K562 (cell line): ENCODE measurements at regions of chr17 and their contacts with region 1.

Region 1: DNA sequence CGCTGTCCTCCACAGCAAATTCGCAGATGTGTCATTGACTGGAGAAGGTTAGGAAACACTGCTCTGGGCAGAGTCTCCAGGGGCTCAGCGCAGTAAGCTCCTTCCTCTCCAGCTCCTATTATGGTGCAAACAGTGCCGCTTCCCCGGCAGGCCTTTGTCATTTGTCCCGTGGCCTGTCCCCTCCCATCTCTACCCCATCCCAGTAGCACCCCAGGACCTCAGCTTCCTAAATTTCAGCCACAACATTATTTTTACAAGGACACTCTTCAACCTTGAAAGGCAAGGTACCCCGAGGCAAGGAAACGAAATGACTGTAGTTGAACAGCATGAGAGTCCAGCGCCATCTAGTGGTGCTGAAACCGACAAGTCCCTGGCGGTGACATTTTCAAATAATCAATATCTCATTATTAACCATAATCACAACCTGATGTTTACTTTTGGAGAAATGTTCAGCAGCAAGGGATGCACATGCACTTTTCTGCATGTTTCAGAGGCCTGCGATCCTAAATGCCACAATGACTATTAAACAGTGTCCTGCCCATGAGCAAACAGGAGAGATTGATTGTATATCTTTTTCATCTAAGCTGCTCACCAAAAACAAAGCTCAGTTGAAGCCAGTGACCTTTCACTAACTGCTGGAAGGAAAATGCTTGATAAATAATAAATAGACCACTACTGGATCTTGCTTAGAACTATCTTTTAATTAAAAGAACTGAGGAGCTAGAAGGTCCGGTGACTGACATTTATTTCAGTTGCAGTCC is 16.5 kb downstream of the MRPS23 start:
- DNase-seq: peak; percentile 53 to 78 (median 62)
- ATAC-seq: peak; percentile 86
- H3K4me3 ChIP-seq: no peak overlapping the region
- H3K27ac ChIP-seq: no peak overlapping the region
- H3K4me1 ChIP-seq: 0 out of 5 replicates have a peak, but pooled peaks cover 0 to 3% of the 10 kb centered on the region in 2 experiments
- H3K27me3 ChIP-seq: no peaks in the 10 kb centered on the region; a peak in 1 of 5 replicates
- CTCF ChIP-seq: peak; percentile 87 to 91 (median 90)
- EP300 ChIP-seq: no peak
- POLR2A ChIP-seq: no peak
- RAD21 ChIP-seq: peak; percentile 52 to 75

Region 2: GRCh38 chr17:57130761-57131461 is 702.4 kb before region 1 on chr17:
- CTCF ChIA-PET with region 1: interaction called, 5 read pairs
- POLR2A ChIA-PET with region 1: no interaction called
- in situ Hi-C with region 1: no loop called
- intact Hi-C with region 1: loop called (anchors 5 kb)
- DNase-seq: peak; percentile 88 to 91 (median 90)
- ATAC-seq: peak; percentile 98
- H3K4me3 ChIP-seq: no peak overlapping the region
- H3K27ac ChIP-seq: no peak overlapping the region
- H3K4me1 ChIP-seq: peaks cover 0 to 4% of the 10 kb centered on the region in 2 experiments; a peak in 1 of 5 replicates
- H3K27me3 ChIP-seq: peaks cover 18 to 20% of the 10 kb centered on the region in 2 experiments
- CTCF ChIP-seq: peak; percentile 63 to 85 (median 81)
- EP300 ChIP-seq: no peak
- POLR2A ChIP-seq: no peak
- RAD21 ChIP-seq: peak; percentile 60 to 77

Region 3: DNA sequence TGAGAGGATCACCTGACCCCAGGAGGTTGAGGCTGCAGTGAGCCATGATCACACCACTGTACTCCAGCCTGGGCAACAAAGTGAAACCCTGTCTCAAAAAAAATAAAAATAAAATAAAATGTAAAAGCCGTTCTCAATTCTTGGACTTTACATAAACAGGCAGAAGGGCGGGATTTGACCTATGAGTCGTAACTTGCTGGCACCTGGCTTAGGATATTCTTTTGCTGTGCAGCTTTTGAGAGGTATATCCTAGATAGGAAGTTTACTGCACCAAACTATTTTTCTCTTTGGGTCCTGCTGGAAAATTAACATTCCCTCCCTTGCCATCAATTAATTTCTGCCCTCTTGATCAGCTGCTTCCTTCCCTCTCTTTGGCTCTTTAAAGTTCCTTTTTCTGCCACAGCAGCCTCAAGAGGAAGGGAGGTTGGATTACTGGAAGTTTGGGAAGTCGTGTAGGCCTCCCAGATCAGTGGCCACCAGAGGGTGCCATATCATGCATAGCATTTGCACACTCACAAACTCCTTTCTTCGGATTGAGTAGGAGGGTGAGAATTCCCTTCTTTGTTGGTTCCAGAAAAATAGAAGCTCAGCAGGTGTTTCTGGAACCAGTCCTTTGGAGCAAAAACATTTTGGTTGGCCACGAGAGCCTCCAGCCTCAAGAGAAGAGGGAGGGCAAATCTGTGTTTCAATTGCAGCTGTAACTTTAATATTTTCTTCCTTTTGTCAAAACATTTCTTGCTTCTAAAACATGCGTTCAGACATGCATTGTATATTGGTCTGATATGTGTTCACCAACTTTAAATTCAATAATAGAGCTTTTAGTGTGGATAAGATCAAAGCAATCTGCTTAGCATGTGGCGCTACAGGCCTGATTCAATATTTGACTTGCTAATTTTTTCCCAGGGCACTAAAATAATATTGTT is 235.6 kb before region 1 on chr17:
- CTCF ChIA-PET with region 1: no interaction called
- POLR2A ChIA-PET with region 1: no interaction called
- in situ Hi-C with region 1: no loop called
- intact Hi-C with region 1: loop called (anchors 5 kb)
- DNase-seq: peak; percentile 50 to 61 (median 60)
- ATAC-seq: peak; percentile 80
- H3K4me3 ChIP-seq: no peak overlapping the region
- H3K27ac ChIP-seq: no peak overlapping the region
- H3K4me1 ChIP-seq: no peaks in the 10 kb centered on the region
- H3K27me3 ChIP-seq: no peaks in the 10 kb centered on the region
- CTCF ChIP-seq: peak; percentile 67 to 81 (median 76)
- EP300 ChIP-seq: no peak
- POLR2A ChIP-seq: no peak
- RAD21 ChIP-seq: peak; percentile 46 to 75; a peak in 3 of 4 replicates

Region 4: GRCh38 chr17:57819285-57819684 is 14.1 kb before region 1 on chr17:
- CTCF ChIA-PET with region 1: no interaction called
- POLR2A ChIA-PET with region 1: no interaction called
- in situ Hi-C with region 1: no loop called
- intact Hi-C with region 1: no loop called
- DNase-seq: no peak
- ATAC-seq: no peak
- H3K4me3 ChIP-seq: no peak overlapping the region
- H3K27ac ChIP-seq: no peak overlapping the region
- H3K4me1 ChIP-seq: no peaks in the 10 kb centered on the region
- H3K27me3 ChIP-seq: peaks cover 42 to 43% of the 10 kb centered on the region in 2 experiments
- CTCF ChIP-seq: no peak
- EP300 ChIP-seq: no peak
- POLR2A ChIP-seq: no peak
- RAD21 ChIP-seq: no peak

Region 5: DNA sequence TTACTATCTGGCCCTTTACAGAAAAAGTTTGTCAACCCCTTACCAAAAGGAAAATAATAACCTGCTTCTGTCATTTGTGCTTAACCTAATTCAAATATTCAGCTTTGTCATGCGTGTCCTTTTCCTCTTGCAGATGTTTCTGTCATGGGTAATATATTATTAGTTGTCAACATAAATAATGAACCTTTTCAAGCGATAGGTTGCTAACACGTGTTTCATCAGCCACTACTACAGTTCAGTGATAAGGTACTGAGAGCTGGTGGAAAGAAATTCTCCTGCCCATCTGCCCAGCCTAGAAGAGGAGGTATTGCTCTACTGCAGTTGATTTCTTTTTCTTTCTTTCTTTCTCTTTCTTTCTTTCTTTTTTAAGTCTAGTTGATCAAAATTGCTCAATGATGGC is 185.7 kb after region 1 on chr17:
- CTCF ChIA-PET with region 1: no interaction called
- POLR2A ChIA-PET with region 1: no interaction called
- in situ Hi-C with region 1: no loop called
- intact Hi-C with region 1: no loop called
- DNase-seq: no peak
- ATAC-seq: peak; percentile 68
- H3K4me3 ChIP-seq: no peak overlapping the region
- H3K27ac ChIP-seq: no peak overlapping the region
- H3K4me1 ChIP-seq: no peaks in the 10 kb centered on the region; a peak in 2 of 5 replicates
- H3K27me3 ChIP-seq: peaks cover 3 to 21% of the 10 kb centered on the region in 2 experiments; a peak in 4 of 5 replicates
- CTCF ChIP-seq: no peak
- EP300 ChIP-seq: peak; percentile 7; the same call in 1 of the 2 replicates
- POLR2A ChIP-seq: no peak
- RAD21 ChIP-seq: no peak